GM10248 (cell line): ENCODE measurements at regions of chr9 and their contacts with region 1.

Region 1: DNA sequence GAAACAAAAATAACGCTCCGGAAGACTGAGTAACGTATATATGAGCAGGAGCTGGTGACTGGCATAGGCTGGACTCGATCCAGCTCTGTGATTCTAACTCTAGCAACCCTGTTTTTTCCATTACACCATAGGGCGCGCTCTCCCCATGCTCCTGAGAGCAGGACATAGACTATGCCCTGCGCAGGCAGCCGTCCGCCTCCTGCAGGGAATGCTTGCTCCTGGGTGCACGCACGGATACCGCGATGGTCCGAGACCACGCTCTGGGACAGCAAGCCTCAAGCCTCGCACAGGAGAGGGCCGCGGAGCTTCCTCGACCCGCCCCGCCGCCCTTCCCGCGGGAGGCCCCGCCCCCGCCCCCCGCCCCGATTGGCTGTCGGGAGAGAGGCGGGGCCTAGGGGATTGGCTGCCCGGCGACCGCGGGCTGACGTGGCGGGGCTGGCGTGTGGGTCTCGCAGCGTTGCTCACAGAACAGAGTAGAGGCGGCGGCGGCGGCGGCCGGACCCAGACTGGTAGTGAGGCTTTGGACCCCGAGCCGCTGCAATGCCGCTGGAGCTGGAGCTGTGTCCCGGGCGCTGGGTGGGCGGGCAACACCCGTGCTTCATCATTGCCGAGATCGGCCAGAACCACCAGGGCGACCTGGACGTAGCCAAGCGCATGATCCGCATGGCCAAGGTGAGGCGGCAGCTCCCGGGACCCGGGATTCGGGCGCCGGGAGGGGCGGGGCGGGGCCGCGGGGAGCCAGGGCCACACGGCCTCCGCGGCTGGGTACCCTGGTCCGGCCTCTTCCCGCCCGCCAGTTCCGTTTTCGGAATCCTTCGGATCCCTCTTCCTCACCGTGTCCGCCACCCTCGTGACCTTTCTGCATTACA is at the start of gene NANS:
- DNase-seq: peak; percentile 99
- CTCF ChIP-seq: no peak

Region 2: GRCh38 chr9:98045234-98046179 is 11.0 kb before region 1 on chr9:
- CTCF ChIA-PET with region 1: interaction called, 10 read pairs
- POLR2A ChIA-PET with region 1: interaction called, 19 read pairs
- DNase-seq: no peak
- CTCF ChIP-seq: peak; percentile 20